G401 (cell line): ENCODE measurements at regions of chr15 and their contacts with region 1.

Region 1: DNA sequence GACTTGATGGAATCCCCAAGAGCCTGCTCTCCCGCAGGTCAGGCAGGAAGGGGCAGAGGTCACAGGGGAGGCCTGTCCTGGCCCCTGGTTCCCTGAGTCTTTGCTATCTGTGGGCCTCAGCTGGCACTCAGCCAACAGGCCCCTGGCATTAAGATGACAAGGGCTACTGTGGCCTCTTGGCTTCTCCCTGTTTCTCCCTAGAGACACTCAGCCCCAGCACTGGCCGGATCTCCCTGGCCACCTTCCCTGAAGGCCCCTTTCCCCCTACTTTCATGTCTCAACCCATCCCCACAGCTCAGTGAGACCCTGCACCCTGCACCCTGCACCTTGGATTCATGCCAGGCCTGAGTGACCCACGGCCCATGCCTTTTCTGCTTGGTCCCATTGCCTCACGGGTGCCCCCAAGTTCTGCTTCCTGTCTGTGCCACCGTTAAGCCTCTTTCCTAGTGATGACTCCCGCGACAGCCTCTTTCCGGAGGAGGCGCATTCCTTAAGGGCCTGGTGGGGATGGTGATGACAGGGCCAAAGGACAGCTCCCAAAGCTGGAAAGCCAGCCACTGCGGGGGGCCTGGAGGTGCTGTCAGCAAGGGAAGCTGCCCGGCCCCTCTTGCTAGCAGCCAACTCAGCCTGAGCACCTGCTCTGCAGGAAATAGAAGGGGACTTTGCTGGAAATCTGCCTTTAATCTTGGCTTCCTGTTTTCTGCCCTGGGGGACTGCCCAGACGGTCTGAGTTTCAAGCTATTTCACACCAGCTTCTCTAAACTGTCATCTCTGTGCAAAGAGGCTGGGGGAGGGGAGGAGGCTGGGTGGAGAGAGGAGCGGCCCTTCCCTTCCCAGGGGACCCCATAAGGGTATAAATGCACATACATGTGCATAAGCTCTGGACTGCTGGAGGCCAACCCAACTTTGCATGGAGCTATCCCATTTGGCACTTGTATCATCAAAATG is 4.8 kb upstream of the CSK start:
- DNase-seq: no peak

Region 2: DNA sequence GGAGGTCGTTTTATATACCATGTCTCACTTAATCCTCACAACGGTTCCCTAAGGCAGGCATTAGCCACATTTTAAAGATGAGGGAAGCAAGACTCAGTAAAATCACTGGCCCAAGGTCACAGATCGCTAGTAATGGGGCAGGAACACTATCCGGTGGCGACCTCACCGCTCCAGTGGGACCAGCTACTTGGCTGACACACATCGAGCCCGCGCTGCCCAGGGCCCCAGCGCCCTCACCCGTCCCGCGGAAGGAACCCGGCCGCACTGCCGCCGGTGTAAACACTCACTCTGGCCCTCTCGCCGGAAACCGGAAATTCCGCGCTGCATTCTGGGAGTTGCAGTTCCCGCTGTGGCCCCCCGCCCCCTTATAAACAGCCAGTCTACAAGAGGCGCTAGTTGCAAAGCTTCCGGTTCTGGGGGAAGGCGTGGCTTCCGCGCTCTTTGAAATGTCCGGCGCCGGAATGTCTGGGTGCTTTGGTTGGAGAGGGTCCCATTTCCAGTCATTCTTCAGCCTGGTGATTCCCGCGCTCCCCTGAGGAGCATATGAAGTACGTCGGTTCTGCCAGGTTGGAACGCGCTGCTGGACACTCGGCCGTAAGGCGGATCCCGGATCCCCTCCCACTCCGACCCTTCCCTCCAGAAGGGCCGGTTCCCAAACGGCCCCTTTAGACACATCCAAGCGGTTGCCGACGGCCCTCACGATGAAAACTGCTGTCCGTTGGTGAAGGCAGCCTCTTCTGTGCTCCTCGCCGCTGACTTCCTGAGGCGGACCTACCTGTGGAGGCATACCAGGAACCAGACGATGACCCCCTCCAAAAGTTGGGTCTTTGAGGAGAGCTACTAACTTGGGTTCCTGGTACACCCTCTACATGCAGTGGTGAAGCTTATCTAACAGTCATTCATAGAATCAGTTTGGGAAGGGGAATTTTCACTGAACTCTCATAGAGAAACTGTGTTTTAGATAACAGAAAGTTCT is 315.9 kb before region 1 on chr15 and contains the start of gene UBL7:
- in situ Hi-C with region 1: no loop called
- DNase-seq: peak; percentile 97
- total RNA-seq, gene UBL7: 111 and 117 TPM in 2 replicates

Region 3: DNA sequence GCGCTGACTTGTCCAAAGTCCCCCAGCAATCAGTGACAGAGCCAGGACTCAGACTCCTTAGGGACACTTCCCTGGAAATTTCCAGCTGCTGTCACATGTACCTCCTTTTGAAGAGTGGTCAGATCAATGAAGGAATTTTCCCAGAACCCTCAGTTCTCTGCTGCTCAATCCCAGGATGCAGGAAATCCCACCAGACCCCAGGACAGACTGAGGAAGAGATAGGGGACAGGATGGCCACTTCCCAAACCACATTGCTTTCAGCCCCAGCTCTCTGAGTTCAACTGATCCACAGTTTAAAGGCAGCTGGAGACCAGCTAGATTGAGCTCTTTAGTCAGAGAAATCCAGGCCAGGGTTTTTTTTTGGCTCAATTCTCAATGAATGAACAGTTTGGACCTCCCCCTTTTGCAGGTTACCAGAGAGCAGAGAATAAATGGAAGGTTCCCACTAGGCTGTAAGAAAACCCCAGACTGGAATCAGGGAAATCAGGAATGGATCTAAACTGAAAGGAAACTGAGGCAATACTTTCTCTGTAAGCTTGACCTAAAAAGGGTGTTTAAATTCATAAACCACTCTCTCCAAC is 53.3 kb before region 1 on chr15:
- in situ Hi-C with region 1: no loop called
- DNase-seq: peak; percentile 85

Region 4: GRCh38 chr15:74816808-74817674 is 39.9 kb after region 1 on chr15:
- in situ Hi-C with region 1: loop called (anchors 5 kb)
- DNase-seq: peak; percentile 68